RWPE1 (cell line): ENCODE measurements at regions of chr1 and their contacts with region 1.

Region 1: GRCh38 chr1:27395441-27396195 is 3.2 kb downstream of the GPR3 start:
- DNase-seq: peak; percentile 77
- H3K27ac ChIP-seq: peak overlapping the region; percentile 60
- CTCF ChIP-seq: peak; percentile 98

Region 2: DNA sequence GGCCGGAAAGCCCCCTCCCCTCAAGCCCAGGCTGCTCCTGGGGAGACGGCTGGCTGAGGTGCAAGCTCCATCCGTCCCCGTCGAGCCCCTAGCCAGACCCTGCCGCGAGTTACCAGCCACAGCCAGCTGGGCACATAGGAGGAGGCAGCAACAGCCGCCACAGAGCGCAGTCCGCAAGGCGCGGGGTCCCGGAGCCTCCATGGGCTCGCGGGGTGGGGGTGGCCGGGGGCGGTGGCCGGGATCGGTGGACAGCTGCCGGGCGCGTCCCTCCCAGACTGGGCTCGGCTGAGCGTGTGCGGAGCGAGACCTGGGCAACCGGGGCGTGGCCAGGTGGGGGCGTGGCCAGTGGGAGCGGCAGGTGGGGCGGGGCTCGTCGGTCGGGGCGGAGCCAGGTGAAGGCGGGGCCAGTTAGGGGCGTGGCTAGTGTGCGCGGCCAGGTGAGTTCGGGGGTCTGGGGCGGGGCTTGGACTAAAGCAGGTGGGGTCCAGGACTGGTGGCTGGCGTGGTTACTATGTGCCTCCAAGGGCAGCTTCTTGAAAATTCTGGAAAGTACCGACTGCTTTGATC is 12.5 kb before region 1 on chr1 and contains the start of gene CD164L2:
- CTCF ChIA-PET with region 1: interaction called, 15 read pairs
- POLR2A ChIA-PET with region 1: no interaction called
- DNase-seq: peak; percentile 90
- H3K27ac ChIP-seq: peak within 1 kb of the TSS; percentile 27
- CTCF ChIP-seq: no peak